CD8-positive, alpha-beta memory T cell (primary cell): ENCODE measurements at regions of chr14 and their contacts with region 1.

Region 1: DNA sequence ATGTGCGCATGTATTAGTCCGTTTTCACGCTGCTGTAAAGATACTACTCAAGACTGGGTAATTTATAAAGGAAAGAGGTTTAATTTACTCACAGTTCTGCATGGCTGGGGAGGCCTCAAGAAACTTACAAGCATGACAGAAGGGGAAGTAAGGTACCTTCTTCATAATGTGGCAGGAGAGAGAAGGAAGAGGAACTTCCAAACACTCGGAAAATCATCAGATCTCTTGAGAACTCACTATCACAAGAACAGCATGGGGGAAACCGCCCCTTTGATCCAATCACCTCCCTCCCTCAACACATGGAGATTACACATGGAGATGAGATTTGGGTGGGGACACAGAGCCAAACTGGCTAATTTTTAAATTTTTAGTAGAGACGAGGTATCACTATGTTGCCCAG is 41.8 kb upstream of the SNX6 start:
- DNase-seq: no peak
- H3K4me3 ChIP-seq: no peak overlapping the region
- H3K4me3 Mint-ChIP-seq: no peak overlapping the region
- H3K27ac ChIP-seq: no peak overlapping the region
- H3K27ac Mint-ChIP-seq: no peak overlapping the region
- H3K4me1 ChIP-seq: no peaks in the 10 kb centered on the region
- H3K4me1 Mint-ChIP-seq: no peaks in the 10 kb centered on the region
- H3K27me3 ChIP-seq: no peaks in the 10 kb centered on the region
- H3K27me3 Mint-ChIP-seq: peaks cover 0 to 3% of the 10 kb centered on the region in 2 donors

Region 2: GRCh38 chr14:34571771-34572170 is 99.9 kb before region 1 on chr14:
- CTCF ChIA-PET with region 1: no interaction called
- POLR2A ChIA-PET with region 1: no interaction called
- DNase-seq: no peak
- H3K4me3 ChIP-seq: no peak overlapping the region
- H3K4me3 Mint-ChIP-seq: no peak overlapping the region
- H3K27ac ChIP-seq: no peak overlapping the region
- H3K27ac Mint-ChIP-seq: no peak overlapping the region
- H3K4me1 ChIP-seq: no peaks in the 10 kb centered on the region
- H3K4me1 Mint-ChIP-seq: no peaks in the 10 kb centered on the region
- H3K27me3 ChIP-seq: no peaks in the 10 kb centered on the region
- H3K27me3 Mint-ChIP-seq: no peaks in the 10 kb centered on the region

Region 3: GRCh38 chr14:34582117-34582680 is 89.5 kb before region 1 on chr14:
- CTCF ChIA-PET with region 1: no interaction called
- POLR2A ChIA-PET with region 1: no interaction called
- DNase-seq: no peak
- H3K4me3 ChIP-seq: no peak overlapping the region
- H3K4me3 Mint-ChIP-seq: no peak overlapping the region
- H3K27ac ChIP-seq: no peak overlapping the region
- H3K27ac Mint-ChIP-seq: no peak overlapping the region
- H3K4me1 ChIP-seq: no peaks in the 10 kb centered on the region
- H3K4me1 Mint-ChIP-seq: peaks cover 0 to 8% (median 0%) of the 10 kb centered on the region in 3 donors
- H3K27me3 ChIP-seq: no peaks in the 10 kb centered on the region
- H3K27me3 Mint-ChIP-seq: no peaks in the 10 kb centered on the region

Region 4: GRCh38 chr14:34650421-34651216 is 21.1 kb before region 1 on chr14:
- CTCF ChIA-PET with region 1: no interaction called
- POLR2A ChIA-PET with region 1: no interaction called
- DNase-seq: no peak
- H3K4me3 ChIP-seq: no peak overlapping the region
- H3K4me3 Mint-ChIP-seq: no peak overlapping the region
- H3K27ac ChIP-seq: no peak overlapping the region
- H3K27ac Mint-ChIP-seq: no peak overlapping the region
- H3K4me1 ChIP-seq: no peaks in the 10 kb centered on the region
- H3K4me1 Mint-ChIP-seq: no peaks in the 10 kb centered on the region
- H3K27me3 ChIP-seq: no peaks in the 10 kb centered on the region
- H3K27me3 Mint-ChIP-seq: no peaks in the 10 kb centered on the region

Region 5: GRCh38 chr14:34722717-34723545 is 51.2 kb after region 1 on chr14:
- CTCF ChIA-PET with region 1: interaction called, 52 read pairs
- POLR2A ChIA-PET with region 1: interaction called, 6 read pairs
- DNase-seq: peak in 4 of 5 donors; percentile 11 to 33 (median 26)
- H3K4me3 ChIP-seq: no peak overlapping the region
- H3K4me3 Mint-ChIP-seq: no peak overlapping the region
- H3K27ac ChIP-seq: no peak overlapping the region
- H3K27ac Mint-ChIP-seq: peak overlapping the region in 1 of 8 donors; percentile 75
- H3K4me1 ChIP-seq: no peaks in the 10 kb centered on the region
- H3K4me1 Mint-ChIP-seq: peaks cover 2 to 7% (median 5%) of the 10 kb centered on the region in 3 donors
- H3K27me3 ChIP-seq: no peaks in the 10 kb centered on the region
- H3K27me3 Mint-ChIP-seq: no peaks in the 10 kb centered on the region

Region 6: GRCh38 chr14:34741840-34742239 is 70.1 kb after region 1 on chr14:
- CTCF ChIA-PET with region 1: no interaction called
- POLR2A ChIA-PET with region 1: no interaction called
- DNase-seq: peak in 1 of 5 donors; percentile 21
- H3K4me3 ChIP-seq: no peak overlapping the region
- H3K4me3 Mint-ChIP-seq: peak overlapping the region in 3 of 7 donors; percentile 1 to 42 (median 23)
- H3K27ac ChIP-seq: no peak overlapping the region
- H3K27ac Mint-ChIP-seq: peak overlapping the region in 6 of 8 donors; percentile 19 to 92 (median 60)
- H3K4me1 ChIP-seq: peaks cover 19% of the 10 kb centered on the region
- H3K4me1 Mint-ChIP-seq: peaks cover 15 to 24% (median 21%) of the 10 kb centered on the region in 3 donors
- H3K27me3 ChIP-seq: no peaks in the 10 kb centered on the region
- H3K27me3 Mint-ChIP-seq: peaks cover 0 to 2% of the 10 kb centered on the region in 2 donors